Activated naive CD4-positive, alpha-beta T cell treated with anti-CD3 and anti-CD28 coated beads for 36 hours (primary cell): ENCODE measurements at regions of chr6 and their contacts with region 1.

Region 1: GRCh38 chr6:109382576-109383437 is 540 bp upstream of the CD164 start:
- DNase-seq: peak; percentile 94
- H3K4me3 Mint-ChIP-seq: peak overlapping the region; percentile 96
- H3K27ac Mint-ChIP-seq: peak overlapping the region; percentile 100
- H3K4me1 Mint-ChIP-seq: peaks cover 35% of the 10 kb centered on the region
- H3K27me3 Mint-ChIP-seq: no peaks in the 10 kb centered on the region

Region 2: GRCh38 chr6:107820338-107821261 is 1562.2 kb before region 1 on chr6:
- CTCF ChIA-PET with region 1: no interaction called
- intact Hi-C with region 1: loop called (anchors 5 kb)
- DNase-seq: peak; percentile 55
- H3K4me3 Mint-ChIP-seq: peak overlapping the region; percentile 88
- H3K27ac Mint-ChIP-seq: peak overlapping the region; percentile 98
- H3K4me1 Mint-ChIP-seq: peaks cover 83% of the 10 kb centered on the region
- H3K27me3 Mint-ChIP-seq: no peaks in the 10 kb centered on the region

Region 3: GRCh38 chr6:108835218-108835850 is 547.5 kb before region 1 on chr6:
- CTCF ChIA-PET with region 1: no interaction called
- intact Hi-C with region 1: loop called (anchors 5 kb)
- DNase-seq: peak; percentile 92
- H3K4me3 Mint-ChIP-seq: no peak overlapping the region
- H3K27ac Mint-ChIP-seq: no peak overlapping the region
- H3K4me1 Mint-ChIP-seq: peaks cover 19% of the 10 kb centered on the region
- H3K27me3 Mint-ChIP-seq: peaks cover 3% of the 10 kb centered on the region

Region 4: GRCh38 chr6:109095027-109095834 is 287.6 kb before region 1 on chr6 and contains the start of gene CEP57L1:
- CTCF ChIA-PET with region 1: interaction called, 4 read pairs
- intact Hi-C with region 1: loop called (anchors 1 kb)
- DNase-seq: peak; percentile 97
- H3K4me3 Mint-ChIP-seq: peak within 1 kb of the TSS; percentile 84
- H3K27ac Mint-ChIP-seq: peak within 1 kb of the TSS; percentile 95
- H3K4me1 Mint-ChIP-seq: peaks cover 38% of the 10 kb centered on the region
- H3K27me3 Mint-ChIP-seq: no peaks in the 10 kb centered on the region
- total RNA-seq, gene CEP57L1: 33.3 to 33.5 TPM

Region 5: GRCh38 chr6:109393888-109394285 is 11.1 kb after region 1 on chr6:
- CTCF ChIA-PET with region 1: interaction called, 27 read pairs
- intact Hi-C with region 1: no loop called
- DNase-seq: no peak
- H3K4me3 Mint-ChIP-seq: no peak overlapping the region
- H3K27ac Mint-ChIP-seq: no peak overlapping the region
- H3K4me1 Mint-ChIP-seq: peaks cover 3% of the 10 kb centered on the region
- H3K27me3 Mint-ChIP-seq: no peaks in the 10 kb centered on the region

Region 6: DNA sequence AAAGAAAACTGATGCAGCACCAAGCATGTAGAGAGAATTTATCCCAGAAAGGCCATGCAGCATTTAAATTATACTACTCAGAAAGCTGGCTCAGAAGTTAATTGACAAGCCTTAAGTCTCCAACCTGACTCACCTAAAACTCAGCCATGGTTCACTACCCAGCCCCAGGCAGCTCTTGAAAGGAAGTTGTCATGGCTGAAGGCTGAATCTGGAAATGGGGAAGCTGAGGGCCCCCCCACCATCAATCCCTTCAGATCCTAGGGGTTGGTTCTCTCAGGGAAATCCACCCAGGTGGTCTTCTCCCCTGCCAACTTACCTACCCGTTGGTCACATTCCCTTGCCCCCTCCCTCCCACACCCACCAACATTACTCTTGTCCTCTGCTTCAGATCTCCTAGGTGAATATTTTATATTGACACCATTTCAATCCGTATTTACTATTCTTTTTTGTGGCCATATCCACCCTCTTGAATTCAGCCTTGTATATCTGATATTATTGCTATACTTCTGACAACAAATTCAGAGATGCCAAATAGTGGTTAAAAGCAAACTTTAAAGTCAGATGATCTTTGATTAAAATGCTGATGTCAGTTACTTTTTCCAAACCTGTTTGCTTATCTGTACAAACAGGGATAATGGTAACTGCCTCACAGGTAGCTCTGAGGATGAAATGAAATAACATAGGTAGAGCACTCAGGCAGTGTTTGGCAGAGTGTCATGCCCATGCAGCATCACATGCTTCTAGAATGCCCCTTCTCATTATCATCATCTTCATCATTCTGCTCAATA is 38.2 kb after region 1 on chr6:
- CTCF ChIA-PET with region 1: no interaction called
- intact Hi-C with region 1: no loop called
- DNase-seq: no peak
- H3K4me3 Mint-ChIP-seq: no peak overlapping the region
- H3K27ac Mint-ChIP-seq: no peak overlapping the region
- H3K4me1 Mint-ChIP-seq: no peaks in the 10 kb centered on the region
- H3K27me3 Mint-ChIP-seq: no peaks in the 10 kb centered on the region

Region 7: DNA sequence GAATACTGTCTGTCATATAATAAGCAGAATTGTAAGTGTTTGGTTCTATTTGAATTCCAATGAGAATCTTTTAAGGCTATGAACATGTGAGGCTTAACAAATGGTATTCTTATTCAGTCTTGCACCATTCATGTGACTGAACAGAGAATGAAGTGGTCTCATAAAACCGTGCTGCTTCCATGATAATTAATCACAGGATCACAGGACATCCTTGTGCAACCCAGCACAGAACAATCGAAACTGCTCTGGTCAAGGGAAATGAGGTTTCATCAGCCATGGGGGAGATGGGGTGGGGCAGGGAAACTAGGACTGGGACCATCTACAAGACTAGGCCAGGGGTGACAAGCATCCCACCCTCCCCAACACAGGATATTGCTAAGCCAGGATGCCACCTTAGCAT is 51.6 kb after region 1 on chr6:
- CTCF ChIA-PET with region 1: no interaction called
- intact Hi-C with region 1: no loop called
- DNase-seq: no peak
- H3K4me3 Mint-ChIP-seq: no peak overlapping the region
- H3K27ac Mint-ChIP-seq: no peak overlapping the region
- H3K4me1 Mint-ChIP-seq: no peaks in the 10 kb centered on the region
- H3K27me3 Mint-ChIP-seq: no peaks in the 10 kb centered on the region

Region 8: DNA sequence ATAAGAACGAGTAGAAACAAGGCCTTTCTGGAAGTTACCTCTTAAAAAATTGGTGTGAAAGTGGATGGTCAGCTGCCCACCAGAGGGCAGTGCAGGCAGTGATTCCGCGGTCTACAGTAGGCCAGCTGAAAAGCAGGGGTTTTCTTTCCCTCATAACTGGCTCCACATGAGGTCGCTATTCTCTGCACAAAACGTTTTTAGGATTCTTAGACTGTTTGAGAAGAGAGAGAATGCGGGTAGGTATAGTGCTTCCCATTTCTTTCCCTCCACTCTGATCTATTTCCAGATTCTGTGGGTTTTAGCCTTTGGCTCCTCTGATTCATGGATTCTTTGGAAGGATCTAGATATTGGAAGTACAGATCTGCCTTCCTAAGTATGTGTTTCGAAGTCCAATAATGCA is 322.5 kb after region 1 on chr6:
- CTCF ChIA-PET with region 1: no interaction called
- intact Hi-C with region 1: loop called (anchors 1 kb)
- DNase-seq: peak; percentile 91
- H3K4me3 Mint-ChIP-seq: no peak overlapping the region
- H3K27ac Mint-ChIP-seq: no peak overlapping the region
- H3K4me1 Mint-ChIP-seq: peaks cover 9% of the 10 kb centered on the region
- H3K27me3 Mint-ChIP-seq: no peaks in the 10 kb centered on the region